ENCODE measurements at regions of chr5 and their contacts with region 1.

Region 1: GRCh38 chr5:168020542-168021294 is 270.7 kb upstream of the WWC1 start:
- DNase-seq: peak in 1 of 2 donors; percentile 13
- ATAC-seq: peak in 1 of 8 donors; percentile 50
- H3K4me3 ChIP-seq: no peak overlapping the region
- H3K27ac ChIP-seq: peak overlapping the region; percentile 1 to 72 (median 51)
- H3K4me1 ChIP-seq: peaks cover 0 to 73% (median 29%) of the 10 kb centered on the region in 9 donors
- H3K27me3 ChIP-seq: peaks cover 0 to 11% (median 0%) of the 10 kb centered on the region in 7 donors
- CTCF ChIP-seq: peak in 6 of 9 donors; percentile 7 to 50 (median 42)

Region 2: DNA sequence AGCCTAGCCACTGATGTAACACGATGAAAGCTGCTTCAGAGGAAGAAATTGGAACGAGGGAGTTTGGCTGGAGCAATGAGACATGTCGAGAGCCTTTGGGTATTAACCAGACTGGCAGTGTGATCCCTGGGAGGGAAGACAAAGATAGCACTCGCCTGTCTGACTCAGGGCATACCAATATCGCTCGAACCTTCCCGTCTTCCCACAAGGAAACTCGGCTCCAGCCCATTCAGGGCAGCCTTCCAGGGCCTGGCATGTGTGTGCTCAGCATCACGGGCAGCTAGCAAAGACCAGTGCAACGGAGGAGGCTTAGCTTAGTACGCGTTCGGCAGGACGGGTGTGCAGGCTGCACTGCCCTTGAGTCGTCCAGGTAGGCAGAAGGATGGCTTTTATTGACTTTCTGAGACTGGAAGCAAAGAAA is 86.2 kb before region 1 on chr5:
- intact Hi-C with region 1: loop called in 3 of 10 experiments (anchors 5 to 10 kb)
- DNase-seq: peak; percentile 80 to 81
- ATAC-seq: peak; percentile 68 to 96 (median 94)
- H3K4me3 ChIP-seq: peak overlapping the region in 9 of 10 donors; percentile 36 to 61 (median 54)
- H3K27ac ChIP-seq: peak overlapping the region; percentile 51 to 92 (median 82)
- H3K4me1 ChIP-seq: peaks cover 0 to 15% (median 0%) of the 10 kb centered on the region in 9 donors
- H3K27me3 ChIP-seq: no peaks in the 10 kb centered on the region
- CTCF ChIP-seq: no peak

Region 3: GRCh38 chr5:167939686-167940085 is 81.0 kb before region 1 on chr5:
- intact Hi-C with region 1: loop called in 4 of 10 experiments (anchors 5 to 10 kb)
- DNase-seq: no peak
- ATAC-seq: no peak
- H3K4me3 ChIP-seq: peak overlapping the region in 1 of 10 donors; percentile 11
- H3K27ac ChIP-seq: peak overlapping the region in 7 of 10 donors; percentile 5 to 90 (median 51)
- H3K4me1 ChIP-seq: peaks cover 0 to 37% (median 6%) of the 10 kb centered on the region in 9 donors
- H3K27me3 ChIP-seq: no peaks in the 10 kb centered on the region
- CTCF ChIP-seq: no peak

Region 4: DNA sequence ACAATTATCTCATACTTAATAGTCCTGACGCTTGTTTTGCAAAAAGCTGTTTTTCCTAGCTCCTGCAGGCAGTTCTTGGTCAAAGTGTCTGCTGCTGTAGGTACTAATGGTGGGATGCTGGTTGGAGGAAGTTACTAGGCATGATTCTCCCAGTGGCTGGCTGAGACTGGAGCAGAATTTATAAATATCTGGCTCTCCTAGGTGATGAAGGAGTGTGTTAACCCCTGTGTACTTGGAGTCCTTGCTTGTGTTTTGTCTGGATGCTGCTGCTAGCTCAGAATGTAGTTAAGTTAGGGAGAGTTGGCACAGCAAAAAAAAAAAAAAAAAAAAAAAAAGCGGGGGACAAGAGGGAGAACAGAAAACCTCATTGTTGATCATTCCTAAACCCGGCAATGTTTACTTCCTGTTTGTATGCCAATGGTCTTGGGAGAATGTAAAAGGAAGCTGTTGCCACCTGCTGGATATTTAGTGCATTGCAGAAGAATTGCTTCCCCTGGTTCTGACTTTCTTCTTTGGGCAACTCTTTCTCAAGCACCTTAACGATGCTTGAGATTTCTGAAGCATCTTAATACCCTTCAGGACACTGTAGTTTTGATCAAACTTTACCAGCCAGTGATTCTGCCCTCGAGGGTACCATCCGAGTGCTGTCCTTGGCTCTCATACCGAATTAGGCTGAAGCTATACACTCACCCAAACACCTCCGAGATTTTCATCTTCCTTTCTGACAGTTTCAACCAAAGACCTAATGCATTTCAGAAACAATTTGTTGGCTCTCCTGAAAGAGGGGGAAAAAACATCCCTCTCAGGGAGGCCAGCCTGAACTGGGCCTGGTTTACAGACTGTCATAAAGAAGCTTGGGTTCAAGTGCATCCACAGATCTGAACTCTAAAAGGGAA is 199.0 kb after region 1 on chr5:
- intact Hi-C with region 1: no loop called
- DNase-seq: peak in 1 of 2 donors; percentile 57
- ATAC-seq: peak in 7 of 8 donors; percentile 54 to 67 (median 63)
- H3K4me3 ChIP-seq: peak overlapping the region in 3 of 10 donors; percentile 17 to 21 (median 18)
- H3K27ac ChIP-seq: no peak overlapping the region
- H3K4me1 ChIP-seq: peaks cover 0 to 33% (median 12%) of the 10 kb centered on the region in 9 donors
- H3K27me3 ChIP-seq: no peaks in the 10 kb centered on the region
- CTCF ChIP-seq: peak; percentile 63 to 91 (median 88)

Measured in heart right ventricle (tissue), 16 donors.